Endothelial cell of umbilical vein (primary cell): ENCODE measurements at regions of chr15 and their contacts with region 1.

Region 1: GRCh38 chr15:67109141-67110034 is 44.0 kb downstream of the SMAD3 start:
- DNase-seq: peak; percentile 94
- H3K4me3 ChIP-seq: no peak overlapping the region
- H3K27ac ChIP-seq: peak overlapping the region; percentile 95
- H3K4me1 ChIP-seq: peaks cover 63% of the 10 kb centered on the region
- H3K27me3 ChIP-seq: no peaks in the 10 kb centered on the region
- CTCF ChIP-seq: no peak
- POLR2A ChIP-seq: no peak

Region 2: DNA sequence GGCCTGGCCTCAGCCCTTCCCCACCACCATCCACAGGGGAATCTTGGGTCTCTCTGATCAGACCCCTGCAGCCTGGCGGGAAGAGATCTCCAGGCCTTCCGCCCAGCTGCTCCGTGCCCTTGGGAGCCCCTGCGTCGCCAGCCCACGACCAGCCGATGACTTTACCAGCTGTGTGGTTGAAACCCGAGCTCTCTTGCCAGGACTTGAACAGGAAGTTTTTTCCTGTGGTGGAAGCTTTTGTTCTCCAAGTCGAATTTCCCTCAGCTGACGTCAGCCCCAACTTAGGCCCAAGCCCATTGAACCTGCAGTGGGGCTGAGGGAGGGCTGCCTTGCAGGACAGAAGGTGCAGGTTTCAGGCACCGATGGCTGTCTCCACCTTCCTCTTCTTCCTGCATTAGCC is 95.7 kb before region 1 on chr15:
- CTCF ChIA-PET with region 1: no interaction called
- POLR2A ChIA-PET with region 1: no interaction called
- dilution Hi-C with region 1: no loop called
- intact Hi-C with region 1: loop called (anchors 1 kb)
- DNase-seq: peak; percentile 97
- H3K4me3 ChIP-seq: no peak overlapping the region
- H3K27ac ChIP-seq: peak overlapping the region; percentile 73
- H3K4me1 ChIP-seq: peaks cover 21% of the 10 kb centered on the region
- H3K27me3 ChIP-seq: no peaks in the 10 kb centered on the region
- CTCF ChIP-seq: no peak
- POLR2A ChIP-seq: peak; percentile 60

Region 3: DNA sequence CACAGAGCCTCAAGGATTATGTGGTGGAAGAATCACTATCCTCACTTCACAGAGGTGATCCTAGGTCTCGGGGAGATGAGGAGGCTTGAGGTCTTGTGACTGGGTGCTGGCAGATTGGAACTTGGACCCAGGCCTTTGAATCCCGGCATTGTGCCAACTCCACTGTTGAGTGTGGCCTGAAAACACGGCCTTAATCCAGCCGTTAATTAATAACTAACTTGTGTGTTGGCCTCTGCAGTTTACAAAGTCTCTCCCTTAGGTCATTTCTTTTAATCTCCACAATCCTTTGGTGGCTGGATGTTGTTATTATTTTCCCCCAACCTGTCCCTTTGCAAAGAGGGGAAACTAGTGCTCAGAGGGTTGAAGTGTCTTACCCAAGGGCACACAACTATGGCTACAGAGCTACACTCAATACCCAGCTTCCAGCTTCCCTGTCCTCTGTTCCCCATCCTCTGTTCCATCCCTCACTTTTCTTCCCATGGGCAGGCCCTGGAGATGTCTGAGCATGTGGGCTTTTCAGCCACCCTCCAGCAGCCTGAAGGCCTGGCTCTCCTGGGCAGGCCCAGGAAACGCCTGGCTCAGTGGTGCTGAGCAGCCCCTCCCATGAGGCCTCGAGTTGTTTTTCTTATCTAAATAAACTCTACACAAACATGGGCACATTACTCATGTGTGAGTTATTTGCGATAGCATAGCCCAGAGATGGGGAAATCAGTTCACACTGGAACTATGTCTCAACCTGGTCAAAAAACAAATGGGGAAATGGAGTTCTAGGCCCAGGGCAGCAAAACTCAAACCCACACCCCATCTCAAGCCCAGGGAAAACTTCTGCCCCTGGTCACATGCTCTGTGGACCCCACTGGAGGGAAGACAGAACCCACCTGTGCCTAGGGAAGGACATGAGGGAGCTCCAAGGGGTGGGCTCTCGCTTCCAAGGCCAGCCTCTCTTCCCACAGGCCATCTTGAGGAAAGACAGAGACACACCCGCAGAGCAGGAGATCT is 60.8 kb before region 1 on chr15:
- CTCF ChIA-PET with region 1: interaction called, 3 read pairs
- POLR2A ChIA-PET with region 1: no interaction called
- dilution Hi-C with region 1: no loop called
- intact Hi-C with region 1: loop called (anchors 2 kb)
- DNase-seq: peak; percentile 68
- H3K4me3 ChIP-seq: no peak overlapping the region
- H3K27ac ChIP-seq: peak overlapping the region; percentile 93
- H3K4me1 ChIP-seq: peaks cover 29% of the 10 kb centered on the region
- H3K27me3 ChIP-seq: no peaks in the 10 kb centered on the region
- CTCF ChIP-seq: no peak
- POLR2A ChIP-seq: no peak

Region 4: DNA sequence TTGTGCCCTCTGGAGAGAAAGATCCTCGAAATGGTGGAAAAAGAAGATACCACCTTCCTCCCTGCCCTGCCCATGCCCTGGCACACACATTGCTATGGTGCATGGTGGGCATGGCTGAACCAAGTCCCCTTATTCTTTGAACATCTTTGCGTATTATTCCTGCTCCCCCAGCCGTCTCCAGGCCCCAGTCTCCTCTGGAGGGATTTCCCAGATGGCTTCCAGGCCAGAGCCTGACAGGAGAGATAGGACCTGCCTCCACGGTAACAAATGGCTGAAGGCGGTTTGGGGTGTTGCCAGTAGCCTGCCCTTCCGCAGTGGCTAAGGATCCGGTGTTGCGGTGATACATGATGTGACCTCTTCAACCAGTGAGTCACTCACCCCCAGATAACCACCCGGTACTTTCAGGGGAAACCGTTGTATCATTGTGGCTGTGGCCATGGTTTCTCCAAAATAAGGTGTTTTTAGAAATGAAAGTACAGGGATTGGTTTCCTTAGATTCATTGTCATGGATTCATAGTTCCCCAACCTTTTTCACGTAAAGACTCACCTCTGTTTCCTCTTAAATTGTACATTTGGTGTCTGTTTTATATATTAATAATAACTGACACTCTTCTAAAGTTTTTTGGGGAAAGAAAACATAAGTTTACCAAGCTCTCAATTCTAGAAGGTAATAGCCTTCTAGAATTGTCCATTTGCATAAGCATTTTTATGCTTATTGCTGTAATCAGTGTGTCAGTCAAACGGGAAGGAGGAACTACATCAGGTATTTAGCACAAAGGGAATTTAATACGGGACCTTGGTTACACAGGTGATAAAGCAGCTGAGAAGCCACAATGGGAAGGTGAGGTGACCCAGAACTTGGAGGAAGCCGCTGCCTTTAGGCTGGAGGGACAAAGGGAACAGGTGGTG is 18.1 kb before region 1 on chr15:
- CTCF ChIA-PET with region 1: interaction called, 6 read pairs
- POLR2A ChIA-PET with region 1: no interaction called
- dilution Hi-C with region 1: no loop called
- intact Hi-C with region 1: loop called (anchors 1 kb)
- DNase-seq: peak; percentile 99
- H3K4me3 ChIP-seq: peak overlapping the region in 1 of 3 experiments; percentile 2
- H3K27ac ChIP-seq: peak overlapping the region; percentile 99
- H3K4me1 ChIP-seq: peaks cover 57% of the 10 kb centered on the region
- H3K27me3 ChIP-seq: no peaks in the 10 kb centered on the region
- CTCF ChIP-seq: no peak
- POLR2A ChIP-seq: peak; percentile 61

Region 5: DNA sequence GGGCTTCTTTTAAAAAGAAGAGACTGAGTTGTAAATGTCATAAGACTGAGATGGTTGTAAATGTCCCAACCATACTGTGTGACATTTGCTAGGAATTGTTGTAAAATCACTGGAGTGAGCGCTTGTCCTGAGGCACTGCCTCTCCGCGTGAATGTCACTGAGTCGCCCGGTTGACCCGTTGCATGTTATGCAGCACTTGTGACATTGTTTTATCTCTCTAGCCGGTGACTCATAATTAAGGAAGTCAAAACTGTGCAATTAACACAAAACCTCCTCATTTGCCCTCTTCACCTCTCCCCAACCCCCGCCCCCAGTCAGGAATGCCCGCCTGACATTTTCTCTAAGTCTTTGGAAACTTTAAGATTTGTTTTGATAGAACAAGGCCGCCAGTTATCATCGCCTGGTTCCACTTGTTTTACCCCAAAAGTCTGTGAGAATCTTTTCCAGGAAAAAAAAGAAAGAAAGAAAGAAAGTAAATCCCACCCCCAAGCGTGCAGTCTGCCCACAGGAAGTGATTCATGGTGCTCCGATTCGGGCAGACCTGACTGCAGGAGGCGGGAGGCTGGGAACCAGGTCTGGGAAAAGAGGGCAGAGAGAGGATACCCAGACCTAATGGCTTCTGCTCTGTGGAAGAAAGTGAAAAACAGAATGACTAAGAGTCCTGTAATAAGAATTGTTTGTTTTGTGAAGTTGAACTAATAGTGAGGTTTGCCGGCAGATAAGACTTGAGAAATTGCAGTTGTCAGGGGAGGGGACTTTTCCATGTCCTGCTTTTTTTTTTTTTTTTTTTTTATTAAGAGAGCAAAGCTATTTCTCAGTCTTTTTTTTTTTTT is 40.9 kb after region 1 on chr15:
- CTCF ChIA-PET with region 1: interaction called, 4 read pairs
- POLR2A ChIA-PET with region 1: no interaction called
- dilution Hi-C with region 1: no loop called
- intact Hi-C with region 1: loop called (anchors 1 kb)
- DNase-seq: peak; percentile 99
- H3K4me3 ChIP-seq: peak overlapping the region in 2 of 3 experiments; percentile 5 to 30
- H3K27ac ChIP-seq: peak overlapping the region; percentile 100
- H3K4me1 ChIP-seq: peaks cover 53% of the 10 kb centered on the region
- H3K27me3 ChIP-seq: no peaks in the 10 kb centered on the region
- CTCF ChIP-seq: no peak
- POLR2A ChIP-seq: no peak

Region 6: GRCh38 chr15:67254238-67255175 is 145.1 kb after region 1 on chr15 and contains the starts of genes AAGAB and IQCH:
- CTCF ChIA-PET with region 1: no interaction called
- POLR2A ChIA-PET with region 1: no interaction called
- dilution Hi-C with region 1: no loop called
- intact Hi-C with region 1: loop called (anchors 5 kb)
- DNase-seq: peak; percentile 98
- H3K4me3 ChIP-seq: peak within 1 kb of the TSS; percentile 90 to 97 (median 95)
- H3K27ac ChIP-seq: peak within 1 kb of the TSS; percentile 93
- H3K4me1 ChIP-seq: peaks cover 7% of the 10 kb centered on the region
- H3K27me3 ChIP-seq: no peaks in the 10 kb centered on the region
- CTCF ChIP-seq: no peak
- POLR2A ChIP-seq: peak; percentile 84
- total RNA-seq, gene AAGAB: 38.0 and 42.6 TPM in 2 replicates
- total RNA-seq, gene IQCH: 0.51 and 2.6 TPM in 2 replicates